Activated CD8-positive, alpha-beta T cell treated with anti-CD3 and anti-CD28 coated beads for 36 hours (primary cell): ENCODE measurements at regions of chr10 and their contacts with region 1.

Region 1: GRCh38 chr10:28393966-28394568 is 91.2 kb upstream of the MPP7 start:
- DNase-seq: peak; percentile 80
- ATAC-seq: peak; percentile 89
- H3K4me3 Mint-ChIP-seq: no peak overlapping the region
- H3K27ac Mint-ChIP-seq: no peak overlapping the region
- H3K4me1 Mint-ChIP-seq: peaks cover 4% of the 10 kb centered on the region
- H3K27me3 Mint-ChIP-seq: peaks cover 2% of the 10 kb centered on the region
- CTCF ChIP-seq: peak; percentile 94

Region 2: DNA sequence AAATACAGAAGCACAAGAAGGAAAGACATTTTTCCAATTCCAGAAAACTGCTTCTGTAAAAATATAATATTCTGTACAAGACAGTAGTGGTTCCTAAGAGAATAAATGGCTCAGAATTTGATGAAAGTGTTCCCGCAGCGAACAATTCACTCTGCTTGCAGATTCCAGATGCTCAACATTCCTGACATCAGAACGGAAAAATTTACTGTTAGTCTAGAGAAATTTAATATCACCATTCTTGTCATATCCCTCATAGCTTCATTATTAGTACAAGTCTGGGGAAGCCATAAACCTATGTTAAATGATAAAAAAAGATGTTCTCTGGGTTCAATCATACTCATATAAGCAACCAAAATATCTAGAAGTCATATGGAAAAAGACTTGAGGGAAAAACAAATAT is 174.8 kb before region 1 on chr10:
- CTCF ChIA-PET with region 1: interaction called, 10 read pairs
- POLR2A ChIA-PET with region 1: no interaction called
- intact Hi-C with region 1: no loop called
- DNase-seq: no peak
- ATAC-seq: no peak
- H3K4me3 Mint-ChIP-seq: no peak overlapping the region
- H3K27ac Mint-ChIP-seq: no peak overlapping the region
- H3K4me1 Mint-ChIP-seq: peaks cover 30% of the 10 kb centered on the region
- H3K27me3 Mint-ChIP-seq: no peaks in the 10 kb centered on the region
- CTCF ChIP-seq: no peak

Region 3: DNA sequence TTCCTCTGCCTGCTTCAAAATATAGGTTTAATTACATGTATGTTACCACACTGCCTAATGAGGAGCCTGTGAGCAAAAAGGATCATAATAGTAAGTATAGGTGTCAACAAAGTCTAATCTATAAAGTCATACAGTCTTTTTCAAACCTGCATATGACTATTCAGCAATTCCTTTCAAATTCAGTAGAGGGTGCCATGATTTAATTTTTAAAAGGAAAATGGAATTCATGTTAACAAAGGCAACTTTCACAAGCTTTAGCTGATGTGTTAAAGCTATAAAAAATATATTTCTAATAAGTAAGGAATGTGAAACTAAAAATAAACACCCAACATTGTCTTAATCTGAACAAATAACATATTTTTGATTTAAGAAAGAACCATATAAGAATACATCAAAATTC is 143.3 kb before region 1 on chr10:
- CTCF ChIA-PET with region 1: interaction called, 48 read pairs
- POLR2A ChIA-PET with region 1: no interaction called
- intact Hi-C with region 1: no loop called
- DNase-seq: no peak
- ATAC-seq: no peak
- H3K4me3 Mint-ChIP-seq: no peak overlapping the region
- H3K27ac Mint-ChIP-seq: no peak overlapping the region
- H3K4me1 Mint-ChIP-seq: peaks cover 34% of the 10 kb centered on the region
- H3K27me3 Mint-ChIP-seq: no peaks in the 10 kb centered on the region
- CTCF ChIP-seq: peak; percentile 62

Region 4: DNA sequence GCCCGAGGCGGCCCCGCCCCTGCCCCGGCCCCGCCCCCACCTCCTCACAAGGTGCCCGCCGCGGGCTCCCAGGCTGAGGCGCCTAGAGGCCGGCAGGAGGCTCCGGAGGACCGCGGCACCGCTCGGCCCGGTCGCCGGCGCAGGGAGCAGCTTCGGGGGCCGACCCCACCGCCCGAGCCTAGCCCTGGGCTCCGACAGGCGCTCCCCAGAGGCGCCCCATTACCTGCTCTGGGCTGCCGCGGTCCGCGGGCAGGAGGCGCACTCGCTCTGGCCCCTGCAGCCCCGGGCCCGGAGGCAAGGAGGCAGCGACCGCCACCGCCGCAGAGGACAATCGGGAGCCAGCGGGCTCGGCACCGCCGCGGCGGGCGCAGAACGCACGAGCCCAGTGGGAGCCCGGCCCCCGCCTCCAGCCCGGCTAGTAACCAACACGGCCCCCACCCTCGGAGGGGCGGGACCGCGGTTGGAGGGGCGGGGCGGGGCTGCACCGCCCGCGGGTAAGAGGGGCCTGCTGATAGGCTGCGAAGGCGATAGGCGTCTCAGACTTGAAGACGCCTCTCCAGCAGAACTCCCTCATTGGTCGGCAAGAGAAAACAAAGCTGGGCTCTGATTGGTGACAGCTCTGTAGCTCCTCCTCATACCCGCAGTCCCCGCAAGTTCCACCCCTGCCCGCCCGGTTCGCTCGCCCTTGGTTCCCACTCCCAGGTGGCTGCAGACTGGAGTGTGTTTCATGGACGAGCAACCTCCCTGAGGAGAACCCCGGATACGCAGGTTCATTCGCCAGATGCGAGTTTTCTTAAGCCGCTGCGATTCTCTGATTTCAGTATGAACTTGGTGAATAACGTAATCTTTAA is 91.2 kb before region 1 on chr10 and contains the start of gene MPP7:
- CTCF ChIA-PET with region 1: interaction called, 17 read pairs
- POLR2A ChIA-PET with region 1: interaction called, 3 read pairs
- intact Hi-C with region 1: no loop called
- DNase-seq: peak; percentile 97
- ATAC-seq: peak; percentile 94
- H3K4me3 Mint-ChIP-seq: peak within 1 kb of the TSS; percentile 92
- H3K27ac Mint-ChIP-seq: peak within 1 kb of the TSS; percentile 81
- H3K4me1 Mint-ChIP-seq: peaks cover 48% of the 10 kb centered on the region
- H3K27me3 Mint-ChIP-seq: no peaks in the 10 kb centered on the region
- CTCF ChIP-seq: peak; percentile 57
- total RNA-seq, gene MPP7: 12.6 to 14.3 TPM

Region 5: GRCh38 chr10:28410420-28411135 is 16.5 kb after region 1 on chr10:
- CTCF ChIA-PET with region 1: interaction called, 40 read pairs
- POLR2A ChIA-PET with region 1: interaction called, 4 read pairs
- intact Hi-C with region 1: no loop called
- DNase-seq: no peak
- ATAC-seq: no peak
- H3K4me3 Mint-ChIP-seq: no peak overlapping the region
- H3K27ac Mint-ChIP-seq: no peak overlapping the region
- H3K4me1 Mint-ChIP-seq: peaks cover 12% of the 10 kb centered on the region
- H3K27me3 Mint-ChIP-seq: peaks cover 8% of the 10 kb centered on the region
- CTCF ChIP-seq: no peak

Region 6: GRCh38 chr10:28545967-28546644 is 152.0 kb after region 1 on chr10:
- CTCF ChIA-PET with region 1: no interaction called
- POLR2A ChIA-PET with region 1: no interaction called
- intact Hi-C with region 1: no loop called
- DNase-seq: peak; percentile 14
- ATAC-seq: no peak
- H3K4me3 Mint-ChIP-seq: no peak overlapping the region
- H3K27ac Mint-ChIP-seq: peak overlapping the region; percentile 66
- H3K4me1 Mint-ChIP-seq: peaks cover 73% of the 10 kb centered on the region
- H3K27me3 Mint-ChIP-seq: no peaks in the 10 kb centered on the region
- CTCF ChIP-seq: no peak

Region 7: GRCh38 chr10:28853195-28853594 is 459.1 kb after region 1 on chr10:
- CTCF ChIA-PET with region 1: no interaction called
- POLR2A ChIA-PET with region 1: no interaction called
- intact Hi-C with region 1: no loop called
- DNase-seq: no peak
- ATAC-seq: no peak
- H3K4me3 Mint-ChIP-seq: no peak overlapping the region
- H3K27ac Mint-ChIP-seq: no peak overlapping the region
- H3K4me1 Mint-ChIP-seq: no peaks in the 10 kb centered on the region
- H3K27me3 Mint-ChIP-seq: peaks cover 15% of the 10 kb centered on the region
- CTCF ChIP-seq: no peak